ENCODE measurements at regions of chr7 and their contacts with region 1.

Region 1: DNA sequence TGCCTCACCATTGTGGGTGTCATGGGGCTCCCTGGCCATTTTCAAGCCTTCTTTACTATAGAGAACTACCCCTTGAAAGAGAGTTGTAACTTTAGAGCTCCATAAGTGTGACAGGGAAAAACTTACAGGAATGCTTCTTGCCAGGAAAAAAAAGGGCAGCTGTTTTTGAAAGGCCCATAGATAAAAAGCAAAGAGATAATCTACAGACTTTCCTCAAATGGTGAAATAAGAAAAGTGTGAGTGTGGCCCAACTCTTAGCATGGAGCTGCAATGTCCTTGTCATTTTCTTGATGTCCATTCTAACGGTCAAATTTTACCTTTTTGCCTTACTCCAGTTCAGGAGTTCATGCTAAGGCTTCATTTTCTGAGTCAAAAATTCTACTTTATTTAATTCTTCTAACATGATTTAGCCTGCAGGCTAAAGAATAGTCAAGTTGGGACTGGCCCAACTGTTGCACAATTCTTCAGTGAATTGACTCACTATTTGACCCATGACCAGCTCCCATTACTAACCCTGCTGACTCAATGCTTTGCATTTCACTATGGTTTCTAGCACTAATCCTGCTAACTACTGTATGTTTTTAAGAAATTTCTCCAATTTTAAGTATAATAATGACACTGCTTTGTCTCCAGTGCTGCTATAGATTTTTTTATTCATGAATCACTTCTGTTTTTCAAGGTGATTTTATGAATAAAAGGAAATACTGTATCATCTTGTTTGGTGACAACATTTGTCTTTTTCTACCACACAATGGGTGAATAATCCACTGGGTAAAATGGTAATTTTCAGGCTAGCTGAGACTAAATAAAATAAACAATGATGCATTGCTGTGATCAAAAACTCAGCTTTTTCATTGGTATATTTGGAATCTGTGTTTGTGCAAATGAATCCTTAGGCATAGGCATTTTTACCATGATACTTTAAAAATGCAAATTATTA is 41.4 kb upstream of the SGCE start:
- DNase-seq: peak; percentile 90
- H3K4me3 ChIP-seq: no peak overlapping the region
- H3K27ac ChIP-seq: peak overlapping the region; percentile 95
- H3K4me1 ChIP-seq: peaks cover 38% of the 10 kb centered on the region
- H3K27me3 ChIP-seq: peaks cover 2% of the 10 kb centered on the region
- CTCF ChIP-seq: no peak

Region 2: GRCh38 chr7:94823952-94824351 is 126.6 kb after region 1 on chr7:
- CTCF ChIA-PET with region 1: no interaction called
- dilution Hi-C with region 1: no loop called
- in situ Hi-C with region 1: no loop called
- intact Hi-C with region 1: loop called (anchors 5 kb)
- DNase-seq: peak; percentile 74
- H3K4me3 ChIP-seq: no peak overlapping the region
- H3K27ac ChIP-seq: no peak overlapping the region
- H3K4me1 ChIP-seq: peaks cover 4% of the 10 kb centered on the region
- H3K27me3 ChIP-seq: no peaks in the 10 kb centered on the region
- CTCF ChIP-seq: no peak